ENCODE measurements at regions of chr7 and their contacts with region 1.

Region 1: GRCh38 chr7:150716368-150716767 is at the start of gene GIMAP1:
- DNase-seq: peak; percentile 74
- ATAC-seq: peak; percentile 78
- H3K4me3 Mint-ChIP-seq: peak within 1 kb of the TSS; percentile 85
- H3K27ac Mint-ChIP-seq: peak within 1 kb of the TSS; percentile 92
- H3K4me1 Mint-ChIP-seq: peaks cover 51% of the 10 kb centered on the region
- H3K27me3 Mint-ChIP-seq: no peaks in the 10 kb centered on the region
- total RNA-seq, gene GIMAP1: 6.8 to 12.4 TPM

Region 2: DNA sequence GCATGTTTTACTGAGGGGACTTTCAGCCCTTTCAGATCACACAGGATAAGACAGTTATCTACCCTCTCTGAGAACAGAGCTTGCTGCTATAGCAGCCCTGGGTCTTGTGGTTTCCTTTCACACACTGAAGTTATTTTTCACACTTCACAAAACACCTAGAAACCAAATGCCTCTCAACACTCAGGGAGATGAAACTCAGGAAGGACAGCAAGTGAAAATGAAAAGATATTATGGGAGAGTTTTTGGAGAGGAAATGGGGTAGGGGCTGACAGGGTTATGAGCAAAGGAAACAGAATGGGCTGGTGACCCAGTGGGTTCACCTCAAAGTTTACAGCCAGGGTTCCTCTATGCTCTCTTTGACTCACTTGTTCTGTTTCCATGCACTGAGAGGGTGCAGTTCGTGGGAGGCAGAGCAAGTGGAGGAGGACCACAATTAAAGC is 47.9 kb before region 1 on chr7:
- CTCF ChIA-PET with region 1: interaction called, 14 read pairs
- DNase-seq: peak; percentile 88
- ATAC-seq: peak; percentile 76
- H3K4me3 Mint-ChIP-seq: peak overlapping the region; percentile 36
- H3K27ac Mint-ChIP-seq: peak overlapping the region; percentile 93
- H3K4me1 Mint-ChIP-seq: peaks cover 88% of the 10 kb centered on the region
- H3K27me3 Mint-ChIP-seq: no peaks in the 10 kb centered on the region

Region 3: GRCh38 chr7:150728609-150729008 is 12.2 kb after region 1 on chr7:
- CTCF ChIA-PET with region 1: interaction called, 15 read pairs
- DNase-seq: no peak
- ATAC-seq: no peak
- H3K4me3 Mint-ChIP-seq: no peak overlapping the region
- H3K27ac Mint-ChIP-seq: peak overlapping the region; percentile 36
- H3K4me1 Mint-ChIP-seq: peaks cover 61% of the 10 kb centered on the region
- H3K27me3 Mint-ChIP-seq: no peaks in the 10 kb centered on the region

Region 4: GRCh38 chr7:150737265-150738055 is 21.1 kb after region 1 on chr7 and contains the start of gene GIMAP5:
- CTCF ChIA-PET with region 1: interaction called, 15 read pairs
- DNase-seq: peak; percentile 79
- ATAC-seq: peak; percentile 65
- H3K4me3 Mint-ChIP-seq: peak within 1 kb of the TSS; percentile 94
- H3K27ac Mint-ChIP-seq: peak within 1 kb of the TSS; percentile 98
- H3K4me1 Mint-ChIP-seq: peaks cover 83% of the 10 kb centered on the region
- H3K27me3 Mint-ChIP-seq: no peaks in the 10 kb centered on the region
- total RNA-seq, gene GIMAP5: 41.0 to 42.5 TPM

Region 5: DNA sequence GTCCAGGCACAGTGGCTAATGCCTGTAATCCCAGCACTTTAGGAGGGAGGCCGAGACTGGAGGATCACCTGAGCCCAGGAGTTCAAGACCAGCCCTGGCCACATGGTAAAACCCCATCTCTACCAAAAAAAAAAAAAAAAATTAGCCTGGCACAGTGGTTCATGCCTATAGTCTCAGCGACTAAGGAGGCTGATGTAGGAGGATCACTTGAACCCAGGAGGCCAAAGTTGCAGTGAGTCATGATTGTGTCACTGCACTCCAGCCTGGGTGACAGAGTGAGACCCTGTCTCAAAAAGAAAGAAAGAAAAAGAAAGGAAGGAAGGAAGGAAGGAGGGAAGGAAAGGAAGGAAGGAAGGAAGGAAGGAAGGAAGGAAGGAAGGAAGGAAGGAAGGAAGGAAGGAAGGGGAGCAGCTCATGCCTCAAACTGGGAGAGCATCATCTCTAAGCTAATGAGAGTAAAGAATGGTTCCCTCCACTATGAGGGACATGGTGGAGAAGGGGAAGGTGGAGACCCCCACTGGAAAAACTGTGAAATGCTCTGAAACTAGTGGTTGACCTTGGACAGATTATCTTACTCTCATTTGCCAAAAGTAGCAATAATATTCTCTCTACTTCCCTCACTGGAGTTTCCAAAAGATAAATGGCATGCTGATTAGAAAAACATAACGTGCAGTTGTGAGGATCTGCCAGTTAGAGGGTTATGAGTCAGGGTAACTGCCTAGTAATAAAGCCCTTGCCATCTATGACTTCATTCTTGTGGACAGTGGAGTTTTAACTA is 37.6 kb after region 1 on chr7:
- CTCF ChIA-PET with region 1: interaction called, 14 read pairs
- DNase-seq: no peak
- ATAC-seq: peak; percentile 45
- H3K4me3 Mint-ChIP-seq: no peak overlapping the region
- H3K27ac Mint-ChIP-seq: peak overlapping the region; percentile 97
- H3K4me1 Mint-ChIP-seq: peaks cover 58% of the 10 kb centered on the region
- H3K27me3 Mint-ChIP-seq: no peaks in the 10 kb centered on the region

Measured in activated CD8-positive, alpha-beta memory T cell treated with anti-CD3 and anti-CD28 coated beads, Interleukin-2, amount 10 ng/mL, durations not matched to agents 7 days and 5 days (primary cell).